ENCODE measurements at regions of chr20 and their contacts with region 1.

Region 1: DNA sequence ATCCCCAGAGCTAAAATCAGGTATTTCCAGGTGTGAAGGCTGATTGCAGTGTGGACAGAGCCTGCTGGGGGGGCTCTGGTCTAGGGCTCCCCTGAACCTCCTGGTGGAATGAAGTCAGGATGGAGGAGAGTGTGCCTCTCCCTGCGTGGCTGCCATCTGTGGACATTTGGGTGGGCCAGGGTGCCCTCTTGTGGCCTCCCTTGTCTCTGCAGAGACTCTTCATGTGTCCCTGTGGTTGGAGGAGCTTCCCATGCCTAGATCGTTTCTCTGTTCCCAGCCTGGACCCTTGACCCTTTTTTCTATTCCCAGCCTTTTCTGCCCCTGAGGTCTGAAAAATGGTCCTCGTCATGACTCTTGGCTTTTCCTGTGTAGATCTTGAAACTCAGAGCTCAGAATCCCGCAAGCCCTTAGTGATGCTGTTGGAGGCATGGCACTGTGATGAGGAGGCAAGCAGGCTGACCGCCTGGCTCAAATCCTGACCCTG is 9.9 kb upstream of the PSMF1 start:
- DNase-seq: peak in 2 of 3 donors; percentile 43 to 55
- H3K4me3 ChIP-seq: no peak overlapping the region
- H3K27ac ChIP-seq: no peak overlapping the region
- H3K4me1 ChIP-seq: no peaks in the 10 kb centered on the region
- H3K27me3 ChIP-seq: no peaks in the 10 kb centered on the region

Region 2: DNA sequence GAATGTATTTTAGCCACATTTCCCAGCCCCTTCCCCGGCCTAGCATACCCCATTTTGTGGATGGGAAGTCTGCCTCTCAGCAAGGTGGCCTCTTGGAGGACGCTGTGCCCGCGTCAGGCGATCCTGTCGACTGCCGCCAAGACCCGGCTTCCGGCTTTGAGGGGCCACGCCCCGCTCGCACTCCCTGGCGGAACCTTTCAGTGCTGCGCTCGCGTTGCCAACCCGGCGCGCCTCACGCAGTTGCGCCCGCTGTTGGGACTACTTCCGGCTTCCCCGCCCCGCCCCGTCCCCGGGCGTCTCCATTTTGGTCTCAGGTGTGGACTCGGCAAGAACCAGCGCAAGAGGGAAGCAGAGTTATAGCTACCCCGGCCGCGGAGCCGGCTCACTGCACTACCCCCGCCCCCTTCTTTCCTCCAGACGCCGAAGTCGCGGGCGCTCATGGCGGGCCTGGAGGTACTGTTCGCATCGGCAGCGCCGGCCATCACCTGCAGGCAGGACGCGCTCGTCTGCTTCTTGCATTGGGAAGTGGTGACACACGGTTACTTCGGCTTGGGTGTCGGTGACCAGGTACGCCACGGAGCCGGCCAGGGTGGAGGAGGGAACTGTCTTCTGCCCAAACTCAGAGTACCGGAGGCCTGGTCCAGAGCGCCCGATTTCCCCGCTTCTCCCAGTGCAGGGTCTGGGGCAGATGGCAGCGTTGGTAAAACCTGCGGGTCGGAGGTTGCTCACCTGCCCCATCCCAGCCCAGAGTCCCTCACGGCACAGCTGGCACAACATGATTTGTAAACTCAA is 10.1 kb after region 1 on chr20 and contains the start of gene PSMF1:
- CTCF ChIA-PET with region 1: interaction called, 24 read pairs
- POLR2A ChIA-PET with region 1: no interaction called
- DNase-seq: peak; percentile 96 to 99 (median 98)
- H3K4me3 ChIP-seq: peak within 1 kb of the TSS; percentile 80 to 100 (median 99)
- H3K27ac ChIP-seq: peak within 1 kb of the TSS; percentile 72 to 86
- H3K4me1 ChIP-seq: peaks cover 9 to 51% (median 41%) of the 10 kb centered on the region in 4 experiments
- H3K27me3 ChIP-seq: no peaks in the 10 kb centered on the region

Region 3: DNA sequence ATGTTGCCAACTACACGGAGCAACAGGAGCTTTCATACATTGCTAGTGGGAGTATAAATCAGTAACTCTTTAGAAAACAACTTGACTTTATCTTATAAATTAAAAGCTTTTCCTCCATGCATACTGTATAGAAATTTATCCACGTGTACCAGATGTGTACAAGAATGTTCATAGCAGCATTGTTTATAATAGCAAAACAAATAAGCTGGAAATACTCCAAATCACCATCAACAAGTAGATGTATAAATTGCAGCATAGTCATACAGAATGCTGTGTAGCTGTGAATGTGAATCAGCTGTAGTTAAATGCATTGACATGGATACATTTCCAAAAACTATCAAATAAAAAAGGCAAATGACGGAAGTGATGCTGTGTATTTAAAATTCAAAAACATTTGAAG is 15.9 kb after region 1 on chr20:
- CTCF ChIA-PET with region 1: interaction called, 24 read pairs
- POLR2A ChIA-PET with region 1: no interaction called
- DNase-seq: no peak
- H3K4me3 ChIP-seq: no peak overlapping the region
- H3K27ac ChIP-seq: no peak overlapping the region
- H3K4me1 ChIP-seq: peaks cover 6 to 39% (median 34%) of the 10 kb centered on the region in 4 experiments
- H3K27me3 ChIP-seq: no peaks in the 10 kb centered on the region

Measured in common myeloid progenitor, CD34-positive (primary cell).